Dendritic cell treated with granulocyte-macrophage colony-stimulating factor and Interleukin-4, amounts not matched to agents 40 ng/mL and 50 ng/mL, for 4 days (primary cell): ENCODE measurements at regions of chr20 and their contacts with region 1.

Region 1: GRCh38 chr20:2217857-2218539 is 77.8 kb upstream of the TGM3 start:
- H3K4me3 Mint-ChIP-seq: no peak overlapping the region
- H3K27ac Mint-ChIP-seq: peak overlapping the region; percentile 16
- H3K4me1 Mint-ChIP-seq: peaks cover 51% of the 10 kb centered on the region
- H3K27me3 Mint-ChIP-seq: no peaks in the 10 kb centered on the region

Region 2: DNA sequence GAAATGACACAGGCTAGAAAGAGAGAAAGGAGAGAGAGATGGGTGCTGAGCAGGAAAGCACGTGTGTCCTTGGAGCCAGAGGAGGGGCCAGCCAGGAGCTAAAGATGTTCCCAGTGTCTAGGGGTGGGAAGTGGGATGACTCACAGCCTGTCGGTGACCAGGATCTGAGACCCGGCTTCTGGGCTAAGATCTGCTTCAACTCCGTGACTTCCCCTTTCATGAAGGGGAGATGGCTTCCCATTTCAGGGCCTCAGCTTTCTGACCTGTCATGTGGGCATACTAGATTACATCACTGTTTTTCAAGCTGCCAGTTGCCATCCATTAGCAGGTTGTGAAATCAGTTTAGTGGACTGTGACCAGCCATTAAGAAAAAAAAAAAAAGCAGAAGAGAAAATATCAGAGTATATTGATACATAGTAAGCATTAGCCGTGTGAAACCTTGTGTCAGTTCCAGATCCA is 83.2 kb after region 1 on chr20:
- intact Hi-C with region 1: loop called (anchors 2 kb)
- H3K4me3 Mint-ChIP-seq: no peak overlapping the region
- H3K27ac Mint-ChIP-seq: peak overlapping the region; percentile 80
- H3K4me1 Mint-ChIP-seq: peaks cover 52% of the 10 kb centered on the region
- H3K27me3 Mint-ChIP-seq: peaks cover 5% of the 10 kb centered on the region

Region 3: DNA sequence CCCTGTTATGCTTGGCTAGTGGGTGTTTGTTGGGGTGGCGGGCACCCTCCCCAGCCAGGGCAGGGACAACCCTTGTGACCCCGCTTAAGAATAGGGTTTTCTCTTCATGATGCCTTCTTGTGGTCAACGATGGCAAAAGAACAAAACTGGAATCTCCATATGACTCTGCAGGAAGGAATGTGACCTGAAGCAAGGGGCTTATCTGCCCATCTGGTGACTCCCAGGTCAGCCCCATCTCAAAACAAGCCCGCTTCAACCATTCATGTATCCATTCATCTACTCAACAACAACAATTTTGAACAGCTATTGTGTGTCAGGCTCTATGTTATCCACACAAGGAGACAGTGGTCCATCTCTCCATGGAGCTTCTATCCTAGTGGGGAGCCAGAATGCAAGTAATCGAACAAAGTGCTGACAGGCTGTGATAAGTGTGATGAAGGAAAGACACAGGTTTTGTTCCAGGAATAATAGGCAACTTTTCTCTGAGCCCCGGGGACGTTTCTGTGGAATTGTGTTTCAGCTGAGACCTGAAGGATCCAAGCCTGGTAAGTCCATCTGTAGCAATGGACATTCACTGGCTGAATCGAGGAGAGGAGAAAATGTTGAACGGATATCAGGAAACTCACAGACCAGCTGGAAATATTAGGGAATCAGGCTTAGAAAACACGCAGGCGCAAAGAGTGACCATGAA is 132.0 kb after region 1 on chr20:
- intact Hi-C with region 1: no loop called
- H3K4me3 Mint-ChIP-seq: no peak overlapping the region
- H3K27ac Mint-ChIP-seq: no peak overlapping the region
- H3K4me1 Mint-ChIP-seq: no peaks in the 10 kb centered on the region
- H3K27me3 Mint-ChIP-seq: peaks cover 40% of the 10 kb centered on the region